Tibial artery (tissue), 4 donors: ENCODE measurements at regions of chr4 and their contacts with region 1.

Region 1: DNA sequence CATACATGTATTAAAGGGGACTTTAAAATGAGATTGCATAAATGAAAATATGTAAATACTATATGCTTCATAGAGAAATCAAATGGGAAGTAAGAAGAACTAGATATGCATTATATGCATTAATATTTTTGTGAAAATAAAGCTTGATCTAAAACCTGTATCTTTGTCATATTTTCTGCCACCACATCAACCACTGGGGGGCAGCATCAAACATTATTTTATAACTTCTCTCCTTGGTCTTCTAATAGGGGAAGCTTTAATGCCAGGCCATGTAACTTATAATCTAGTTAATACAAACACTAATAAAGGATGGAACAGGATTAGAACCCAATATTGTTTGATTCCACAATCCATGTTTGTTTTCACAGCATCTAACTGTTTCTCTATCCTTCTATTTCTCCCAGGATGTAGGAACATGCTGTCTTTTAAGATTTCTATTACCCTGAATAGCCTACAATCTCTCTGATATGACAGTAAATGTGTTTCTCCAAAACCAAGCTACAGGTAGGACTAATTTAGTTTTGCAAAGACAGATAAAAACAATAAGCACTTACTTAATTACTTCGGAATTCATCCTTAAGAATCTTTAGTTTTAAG is 10.0 kb downstream of the QRFPR start:
- DNase-seq: peak in 1 of 2 donors; percentile 66
- H3K4me3 ChIP-seq: no peak overlapping the region
- H3K27ac ChIP-seq: no peak overlapping the region
- H3K4me1 ChIP-seq: no peaks in the 10 kb centered on the region
- H3K27me3 ChIP-seq: no peaks in the 10 kb centered on the region
- CTCF ChIP-seq: peak; percentile 54

Region 2: GRCh38 chr4:121584836-121585235 is 214.0 kb after region 1 on chr4:
- intact Hi-C with region 1: no loop called
- DNase-seq: no peak
- H3K4me3 ChIP-seq: no peak overlapping the region
- H3K27ac ChIP-seq: no peak overlapping the region
- H3K4me1 ChIP-seq: no peaks in the 10 kb centered on the region
- H3K27me3 ChIP-seq: no peaks in the 10 kb centered on the region
- CTCF ChIP-seq: no peak

Region 3: DNA sequence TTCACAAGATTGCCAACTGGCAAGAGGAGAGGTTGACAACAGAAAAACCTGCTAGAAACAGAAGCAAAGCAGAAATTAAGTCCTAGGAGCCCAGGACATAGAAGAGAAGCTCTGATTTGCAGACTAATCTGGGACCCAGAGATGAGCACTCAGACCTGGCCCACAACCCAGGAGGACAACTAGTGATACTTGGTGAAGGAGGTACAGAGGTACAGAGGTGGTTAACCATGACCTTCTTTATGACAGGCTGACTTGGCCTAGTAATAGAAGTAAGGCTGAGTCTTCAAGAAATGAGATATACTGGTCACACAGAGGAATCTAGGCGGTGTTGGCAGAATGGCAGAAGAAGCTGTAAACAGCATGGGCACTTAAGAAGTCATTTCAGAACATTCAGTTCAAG is 282.4 kb after region 1 on chr4:
- intact Hi-C with region 1: loop called (anchors 2 kb)
- DNase-seq: no peak
- H3K4me3 ChIP-seq: no peak overlapping the region
- H3K27ac ChIP-seq: no peak overlapping the region
- H3K4me1 ChIP-seq: peaks cover 0 to 28% (median 10%) of the 10 kb centered on the region in 4 donors
- H3K27me3 ChIP-seq: no peaks in the 10 kb centered on the region
- CTCF ChIP-seq: no peak

Region 4: DNA sequence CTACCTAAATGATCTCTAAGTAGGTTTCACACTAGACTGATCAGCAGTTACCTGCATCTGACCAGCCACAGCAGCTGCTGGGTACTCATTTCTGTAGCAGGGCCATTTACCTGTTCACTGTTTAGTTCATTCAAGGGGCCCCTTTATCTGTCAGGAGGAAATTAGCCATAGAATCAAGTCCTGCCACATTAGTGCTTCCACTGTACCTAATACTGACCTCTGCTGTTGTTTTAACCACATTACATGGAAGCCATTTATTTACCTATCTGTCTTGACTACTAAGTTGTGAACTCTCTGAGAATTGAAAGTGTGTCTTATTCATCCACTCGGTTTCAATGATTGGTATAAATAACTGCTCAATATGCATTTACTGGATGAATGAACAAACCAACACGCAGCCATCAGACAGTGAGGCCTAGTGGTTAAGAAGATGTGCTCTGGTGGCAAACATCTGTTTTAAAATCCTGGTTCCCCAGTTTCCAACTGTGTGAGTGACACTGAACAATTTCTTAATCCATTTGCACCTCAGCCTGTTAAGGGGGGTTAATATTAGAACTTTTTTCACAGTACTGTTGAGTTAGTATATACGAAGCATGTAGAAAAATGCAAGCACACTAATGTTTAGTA is 355.9 kb after region 1 on chr4:
- intact Hi-C with region 1: loop called (anchors 5 kb)
- DNase-seq: no peak
- H3K4me3 ChIP-seq: no peak overlapping the region
- H3K27ac ChIP-seq: no peak overlapping the region
- H3K4me1 ChIP-seq: no peaks in the 10 kb centered on the region
- H3K27me3 ChIP-seq: no peaks in the 10 kb centered on the region
- CTCF ChIP-seq: peak; percentile 60 to 74